WTC11 (cell line): ENCODE measurements at regions of chr2 and their contacts with region 1.

Region 1: DNA sequence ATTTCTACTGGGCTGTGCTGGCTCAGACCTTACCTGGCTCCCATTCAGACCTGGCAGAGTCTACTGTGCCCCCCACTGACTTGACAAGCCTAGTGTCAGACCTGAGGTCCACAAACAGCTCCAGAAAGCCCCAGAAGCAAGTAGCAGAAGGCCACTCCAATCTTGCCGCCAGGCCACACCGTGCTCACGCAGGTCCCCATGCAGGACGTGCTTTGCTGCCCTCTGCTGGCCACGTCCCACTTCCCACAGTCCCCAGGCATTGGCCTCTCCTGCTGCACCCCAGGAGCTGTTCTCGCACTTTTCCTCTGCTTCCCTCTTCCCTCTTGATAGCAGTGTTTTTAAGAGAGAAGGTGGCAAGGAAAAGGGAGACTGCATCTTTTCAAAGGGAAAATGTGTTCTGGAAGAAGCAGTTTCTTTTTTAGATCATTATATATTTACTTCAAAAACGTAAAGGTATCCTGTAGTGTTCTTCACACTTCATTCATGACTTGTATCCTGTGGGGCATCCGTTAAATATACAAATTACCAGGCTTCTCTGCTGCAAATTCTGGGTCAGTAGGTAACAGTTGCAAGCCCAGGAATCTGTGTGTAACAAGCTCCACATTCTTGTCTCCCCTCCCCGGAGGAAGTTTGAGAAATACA is 81.4 kb upstream of the PAPOLG start:
- DNase-seq: peak; percentile 92
- ATAC-seq: peak; percentile 97
- H3K4me3 Mint-ChIP-seq: no peak overlapping the region
- H3K27ac Mint-ChIP-seq: no peak overlapping the region
- H3K4me1 Mint-ChIP-seq: peaks cover 26% of the 10 kb centered on the region
- H3K27me3 Mint-ChIP-seq: no peaks in the 10 kb centered on the region; the same call in 1 of the 2 replicates
- CTCF ChIP-seq: peak; percentile 75

Region 2: GRCh38 chr2:60550178-60550983 is 124.3 kb before region 1 on chr2:
- CTCF ChIA-PET with region 1: interaction called, 12 read pairs
- POLR2A ChIA-PET with region 1: no interaction called
- DNase-seq: peak; percentile 80
- ATAC-seq: peak; percentile 47
- H3K4me3 Mint-ChIP-seq: peak overlapping the region; percentile 91
- H3K27ac Mint-ChIP-seq: peak overlapping the region; percentile 93
- H3K4me1 Mint-ChIP-seq: peaks cover 36% of the 10 kb centered on the region
- H3K27me3 Mint-ChIP-seq: no peaks in the 10 kb centered on the region
- CTCF ChIP-seq: peak; percentile 30; the same call in 1 of the 2 replicates

Region 3: GRCh38 chr2:60569680-60570111 is 104.9 kb before region 1 on chr2:
- CTCF ChIA-PET with region 1: interaction called, 11 read pairs
- POLR2A ChIA-PET with region 1: no interaction called
- DNase-seq: no peak
- ATAC-seq: peak; percentile 45
- H3K4me3 Mint-ChIP-seq: no peak overlapping the region
- H3K27ac Mint-ChIP-seq: no peak overlapping the region
- H3K4me1 Mint-ChIP-seq: peaks cover 19% of the 10 kb centered on the region
- H3K27me3 Mint-ChIP-seq: peaks cover 9% of the 10 kb centered on the region
- CTCF ChIP-seq: no peak

Region 4: GRCh38 chr2:60602828-60603532 is 71.7 kb before region 1 on chr2:
- CTCF ChIA-PET with region 1: interaction called, 13 read pairs
- POLR2A ChIA-PET with region 1: no interaction called
- DNase-seq: no peak
- ATAC-seq: peak; percentile 72
- H3K4me3 Mint-ChIP-seq: no peak overlapping the region
- H3K27ac Mint-ChIP-seq: peak overlapping the region; percentile 33
- H3K4me1 Mint-ChIP-seq: peaks cover 24% of the 10 kb centered on the region
- H3K27me3 Mint-ChIP-seq: peaks cover 4% of the 10 kb centered on the region; the same call in 1 of the 2 replicates
- CTCF ChIP-seq: no peak

Region 5: GRCh38 chr2:60648191-60648590 is 26.5 kb before region 1 on chr2:
- CTCF ChIA-PET with region 1: interaction called, 39 read pairs
- POLR2A ChIA-PET with region 1: no interaction called
- DNase-seq: no peak
- ATAC-seq: no peak
- H3K4me3 Mint-ChIP-seq: no peak overlapping the region
- H3K27ac Mint-ChIP-seq: no peak overlapping the region
- H3K4me1 Mint-ChIP-seq: peaks cover 23% of the 10 kb centered on the region
- H3K27me3 Mint-ChIP-seq: peaks cover 4% of the 10 kb centered on the region; the same call in 1 of the 2 replicates
- CTCF ChIP-seq: no peak

Region 6: DNA sequence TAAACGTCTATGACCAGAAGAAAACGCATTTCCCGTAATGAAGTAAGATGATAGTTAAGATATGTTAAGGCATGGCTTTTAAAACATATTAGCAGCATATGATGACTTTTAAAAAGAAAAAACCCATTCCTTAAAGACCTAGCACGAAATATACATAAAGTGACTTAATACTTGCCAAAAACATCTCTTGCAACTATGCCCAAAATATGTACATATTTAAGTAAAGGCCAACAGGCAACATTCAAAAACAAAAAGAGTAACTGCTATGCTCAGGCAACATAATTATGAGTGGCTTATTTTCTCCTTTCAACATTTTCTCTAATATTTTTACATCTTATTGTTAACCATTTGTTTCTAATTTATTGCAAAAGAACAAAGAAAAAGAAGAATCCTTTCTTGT is 21.1 kb after region 1 on chr2:
- CTCF ChIA-PET with region 1: interaction called, 21 read pairs
- POLR2A ChIA-PET with region 1: no interaction called
- DNase-seq: no peak
- ATAC-seq: no peak
- H3K4me3 Mint-ChIP-seq: no peak overlapping the region
- H3K27ac Mint-ChIP-seq: no peak overlapping the region
- H3K4me1 Mint-ChIP-seq: peaks cover 5% of the 10 kb centered on the region; the same call in 1 of the 2 replicates
- H3K27me3 Mint-ChIP-seq: peaks cover 2% of the 10 kb centered on the region; the same call in 1 of the 2 replicates
- CTCF ChIP-seq: no peak

Region 7: DNA sequence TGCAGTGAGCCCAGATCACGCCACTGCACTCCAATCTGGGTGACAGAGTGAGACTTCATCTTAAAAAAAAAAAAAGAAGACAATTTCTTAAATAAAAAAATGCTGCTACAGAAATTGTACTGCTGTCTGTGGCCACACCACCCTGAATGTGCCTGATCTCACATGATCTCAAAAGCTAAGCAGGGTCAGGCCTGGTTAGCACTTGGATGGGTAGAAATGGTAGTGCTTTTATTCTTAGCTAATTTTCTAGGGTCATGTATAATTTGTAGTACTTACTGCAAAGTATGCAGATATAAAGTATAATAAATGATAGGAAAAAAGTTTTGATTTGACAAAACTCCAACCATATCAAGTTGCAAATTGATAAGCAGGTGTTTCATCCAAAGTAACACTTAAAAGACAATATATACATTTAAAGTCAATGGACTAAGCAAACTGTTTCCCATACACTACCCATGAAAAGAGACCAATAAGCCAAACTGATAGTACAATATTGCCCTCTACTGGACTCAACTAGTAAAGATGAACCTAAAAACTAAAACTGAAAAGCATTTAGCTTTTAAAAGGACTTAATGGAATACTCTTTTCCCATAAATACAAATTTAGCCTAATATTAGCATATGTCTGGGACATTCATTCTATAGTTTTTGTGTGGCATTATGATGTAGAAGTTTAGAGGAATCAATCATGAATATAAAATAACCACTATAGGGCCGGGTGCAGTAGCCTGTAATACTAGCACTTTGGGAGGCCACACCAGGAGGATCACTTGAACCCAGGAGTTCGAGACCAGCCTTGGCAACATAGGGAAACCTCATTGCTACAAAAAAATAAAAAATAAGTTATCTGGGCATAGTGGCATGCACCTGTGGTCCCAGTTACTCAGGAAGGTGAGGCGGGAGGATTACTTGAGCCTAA is 324.2 kb after region 1 on chr2:
- CTCF ChIA-PET with region 1: interaction called, 14 read pairs
- POLR2A ChIA-PET with region 1: no interaction called
- DNase-seq: no peak
- ATAC-seq: peak; percentile 66
- H3K4me3 Mint-ChIP-seq: no peak overlapping the region
- H3K27ac Mint-ChIP-seq: no peak overlapping the region
- H3K4me1 Mint-ChIP-seq: peaks cover 4% of the 10 kb centered on the region; the same call in 1 of the 2 replicates
- H3K27me3 Mint-ChIP-seq: peaks cover under 1% of the 10 kb centered on the region; the same call in 1 of the 2 replicates
- CTCF ChIP-seq: peak; percentile 58

Region 8: DNA sequence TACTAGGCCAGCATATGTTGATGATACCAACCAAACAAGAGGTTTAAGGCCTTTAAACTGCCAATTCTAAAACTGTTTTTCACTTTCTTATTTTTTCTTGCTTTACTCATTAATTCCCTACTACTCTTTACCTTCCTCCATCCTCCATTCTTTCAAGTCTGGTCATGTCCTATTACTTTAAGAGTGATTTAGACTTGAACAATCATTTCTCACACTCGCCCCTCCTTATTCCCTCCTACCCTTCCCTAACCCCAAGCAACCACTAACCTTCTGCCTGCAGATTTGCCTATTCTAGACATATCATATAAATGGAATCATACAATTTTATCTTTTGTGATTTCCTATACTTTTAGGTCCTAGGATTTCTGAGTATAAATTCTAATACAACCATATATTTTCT is 668.5 kb after region 1 on chr2:
- CTCF ChIA-PET with region 1: no interaction called
- POLR2A ChIA-PET with region 1: no interaction called
- DNase-seq: no peak
- ATAC-seq: no peak
- H3K4me3 Mint-ChIP-seq: no peak overlapping the region
- H3K27ac Mint-ChIP-seq: no peak overlapping the region
- H3K4me1 Mint-ChIP-seq: no peaks in the 10 kb centered on the region
- H3K27me3 Mint-ChIP-seq: no peaks in the 10 kb centered on the region
- CTCF ChIP-seq: no peak